ENCODE measurements at regions of chr17 and their contacts with region 1.

Region 1: DNA sequence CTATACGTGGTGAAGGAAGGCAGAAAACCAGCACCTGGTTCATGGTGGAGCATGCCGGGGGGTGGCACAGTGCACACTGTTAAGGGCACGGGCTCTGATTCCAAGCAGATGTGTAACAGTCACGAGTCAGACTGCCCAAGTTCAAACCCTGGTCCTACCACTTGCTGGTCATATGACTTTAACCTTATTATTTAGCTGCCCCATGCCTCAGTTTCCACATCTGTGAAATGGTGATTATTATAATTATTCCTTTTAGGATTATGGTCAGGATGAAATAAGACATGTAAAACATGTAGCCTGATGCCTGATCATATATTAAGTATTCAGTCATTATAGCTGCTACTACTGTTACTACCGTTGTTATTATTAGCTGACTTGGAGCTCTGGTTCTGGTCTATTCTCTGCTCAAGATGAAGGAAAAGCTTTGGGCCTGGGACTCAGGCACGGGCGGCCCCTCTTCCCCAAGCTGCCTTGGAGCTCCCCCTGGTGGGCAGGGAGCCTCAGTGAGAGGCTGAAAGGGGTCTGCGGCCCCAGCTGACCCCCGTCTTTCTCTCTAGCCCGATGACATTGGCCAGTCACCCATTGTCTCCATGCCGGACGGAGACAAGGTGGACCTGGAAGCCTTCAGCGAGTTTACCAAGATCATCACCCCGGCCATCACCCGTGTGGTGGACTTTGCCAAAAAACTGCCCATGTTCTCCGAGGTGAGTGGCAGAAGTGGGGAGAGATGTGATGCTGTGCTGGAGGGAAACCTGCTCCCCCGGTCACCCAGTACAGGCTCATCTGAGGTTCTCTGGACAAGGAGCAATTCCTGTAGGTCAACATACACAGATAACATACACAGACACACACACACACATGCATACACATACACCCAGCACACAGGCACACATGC is 14.0 kb downstream of the NR1D1 start:
- DNase-seq: peak; percentile 79
- CTCF ChIP-seq: peak; percentile 86

Region 2: GRCh38 chr17:39975801-39976200 is 110.6 kb before region 1 on chr17:
- CTCF ChIA-PET with region 1: no interaction called
- POLR2A ChIA-PET with region 1: no interaction called
- DNase-seq: no peak
- CTCF ChIP-seq: no peak

Region 3: DNA sequence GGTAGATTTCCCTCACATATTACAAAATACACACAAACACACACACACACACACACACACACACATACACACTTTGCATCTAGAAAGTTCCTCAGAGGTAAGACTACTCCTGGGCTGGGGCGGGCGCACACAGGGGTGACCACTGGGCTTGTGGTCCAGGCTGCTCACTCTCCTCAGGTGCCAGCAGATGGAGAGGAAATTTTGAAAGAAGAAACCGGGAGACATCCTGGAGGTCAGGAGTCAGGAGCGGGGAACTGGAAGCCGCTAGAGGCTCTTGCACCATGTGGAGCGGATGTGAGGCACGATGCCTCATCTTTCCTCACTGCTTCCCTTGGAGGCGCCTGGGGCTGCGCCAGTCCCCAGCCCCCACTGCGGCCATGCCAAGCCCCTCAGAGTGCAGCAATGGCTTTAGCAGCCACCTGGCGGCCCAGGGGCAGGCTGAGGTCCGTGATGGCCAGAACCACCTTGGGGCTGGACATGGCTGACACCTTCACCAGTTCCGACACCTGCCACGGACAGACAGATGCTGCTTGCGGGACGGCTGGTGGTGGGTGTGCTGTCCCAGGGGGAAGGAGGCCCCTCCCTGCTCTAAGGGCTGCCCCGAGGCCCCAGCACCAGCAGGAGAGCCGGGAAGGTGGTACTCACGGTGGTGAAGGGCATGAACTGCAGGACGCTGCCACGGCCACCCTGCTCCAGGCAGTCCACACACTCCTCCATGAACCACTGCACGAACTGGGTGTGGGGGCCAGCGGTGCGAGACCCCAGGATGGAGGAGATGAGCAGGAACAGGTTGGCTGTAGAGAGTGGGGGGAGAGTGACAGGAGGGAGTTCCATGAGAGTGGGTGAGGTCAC is 67.0 kb before region 1 on chr17:
- CTCF ChIA-PET with region 1: interaction called, 18 read pairs
- POLR2A ChIA-PET with region 1: no interaction called
- DNase-seq: no peak
- CTCF ChIP-seq: no peak

Region 4: GRCh38 chr17:40062329-40063186 is 23.8 kb before region 1 on chr17 and contains the start of gene THRA:
- CTCF ChIA-PET with region 1: interaction called, 215 read pairs
- POLR2A ChIA-PET with region 1: no interaction called
- DNase-seq: peak; percentile 88
- CTCF ChIP-seq: peak; percentile 27

Region 5: GRCh38 chr17:40068917-40069750 is 17.3 kb before region 1 on chr17:
- CTCF ChIA-PET with region 1: interaction called, 215 read pairs
- POLR2A ChIA-PET with region 1: no interaction called
- DNase-seq: peak; percentile 70
- CTCF ChIP-seq: no peak

Region 6: DNA sequence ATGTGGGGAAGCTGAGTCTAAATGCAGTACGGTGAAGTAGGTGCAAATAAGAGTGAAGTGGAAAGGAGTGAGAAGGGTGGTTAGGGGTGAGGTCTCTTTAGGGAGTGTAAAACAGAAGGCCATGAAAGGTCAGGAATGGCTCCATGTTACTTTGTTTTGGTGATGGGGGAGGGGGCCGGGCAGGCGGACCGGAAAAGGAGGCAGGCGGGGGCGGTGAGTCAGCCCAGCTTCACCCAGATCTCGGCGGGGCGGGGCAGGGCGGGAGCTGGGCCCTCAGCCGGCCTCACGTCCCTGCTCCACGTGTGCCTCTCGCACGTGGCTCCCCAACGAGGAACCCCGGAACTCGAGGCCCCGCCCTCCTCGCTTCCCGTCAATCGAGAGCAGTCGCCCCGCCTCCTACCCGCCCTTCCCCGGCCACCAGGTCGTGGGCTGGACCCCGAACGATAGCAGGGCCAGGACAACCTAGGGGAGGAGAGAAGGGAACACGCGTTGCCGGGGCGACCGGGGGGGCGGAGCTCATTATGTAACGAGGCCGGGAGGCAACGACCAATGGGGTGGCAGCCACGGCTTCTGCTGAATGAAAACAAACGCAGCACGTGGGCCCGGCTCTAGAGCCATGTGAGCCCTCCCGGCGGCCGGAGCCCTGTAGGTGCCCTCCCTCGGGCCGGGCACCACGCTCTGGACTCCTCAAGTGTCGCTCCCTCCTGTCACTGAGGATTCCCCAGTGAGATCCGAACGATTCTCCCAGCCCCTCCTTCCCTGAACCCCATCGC is 12.6 kb after region 1 on chr17:
- CTCF ChIA-PET with region 1: interaction called, 25 read pairs
- POLR2A ChIA-PET with region 1: no interaction called
- DNase-seq: peak; percentile 94
- CTCF ChIP-seq: no peak

Measured in GM10248 (cell line).